ENCODE measurements at regions of chr22 and their contacts with region 1.

Region 1: GRCh38 chr22:44819971-44820631 is 67.7 kb downstream of the ARHGAP8 start:
- DNase-seq: no peak
- H3K4me3 ChIP-seq: no peak overlapping the region
- H3K27me3 ChIP-seq: peaks cover 19% of the 10 kb centered on the region
- CTCF ChIP-seq: no peak

Region 2: DNA sequence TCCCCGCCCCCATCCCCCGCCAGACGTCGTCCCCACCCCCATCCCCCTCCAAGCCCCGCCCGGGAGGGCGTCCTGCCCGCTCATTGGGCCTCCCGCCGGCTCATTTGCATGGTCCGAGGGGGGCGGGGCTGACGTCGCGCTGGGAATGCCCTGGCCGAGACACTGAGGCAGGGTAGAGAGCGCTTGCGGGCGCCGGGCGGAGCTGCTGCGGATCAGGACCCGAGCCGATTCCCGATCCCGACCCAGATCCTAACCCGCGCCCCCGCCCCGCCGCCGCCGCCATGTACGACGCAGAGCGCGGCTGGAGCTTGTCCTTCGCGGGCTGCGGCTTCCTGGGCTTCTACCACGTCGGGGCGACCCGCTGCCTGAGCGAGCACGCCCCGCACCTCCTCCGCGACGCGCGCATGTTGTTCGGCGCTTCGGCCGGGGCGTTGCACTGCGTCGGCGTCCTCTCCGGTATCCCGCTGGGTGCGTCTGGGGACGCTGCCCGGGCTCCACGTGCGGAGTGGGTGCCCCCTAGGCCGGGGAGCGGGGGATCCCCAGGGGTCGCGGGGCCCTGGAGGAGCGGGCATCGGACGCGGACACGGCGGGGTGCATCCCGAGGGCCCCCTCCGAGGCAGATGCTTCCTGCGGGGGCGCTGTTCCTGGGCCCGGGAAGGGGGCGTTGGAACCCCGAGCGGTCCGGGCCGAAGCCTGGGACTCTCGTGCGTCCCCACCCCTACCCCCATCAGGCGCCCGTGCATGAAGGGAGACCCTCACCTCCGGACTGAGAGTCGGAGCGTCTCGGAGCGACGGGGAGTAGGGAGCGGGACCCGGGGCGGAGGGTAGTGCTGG is 896.3 kb before region 1 on chr22 and contains the start of gene PNPLA3:
- CTCF ChIA-PET with region 1: no interaction called
- POLR2A ChIA-PET with region 1: interaction called, 10 read pairs
- DNase-seq: no peak
- H3K4me3 ChIP-seq: peak within 1 kb of the TSS; percentile 75
- H3K27me3 ChIP-seq: no peaks in the 10 kb centered on the region
- CTCF ChIP-seq: peak; percentile 33
- polyA plus RNA-seq, gene PNPLA3: 3.4 and 4.8 TPM in 2 replicates